Thyroid gland (tissue), 4 donors: ENCODE measurements at regions of chr7 and their contacts with region 1.

Region 1: GRCh38 chr7:90424720-90425119 is 21.5 kb downstream of the CLDN12 start:
- DNase-seq: no peak
- H3K4me3 ChIP-seq: no peak overlapping the region
- H3K27ac ChIP-seq: no peak overlapping the region
- H3K4me1 ChIP-seq: no peaks in the 10 kb centered on the region
- H3K27me3 ChIP-seq: no peaks in the 10 kb centered on the region
- CTCF ChIP-seq: no peak
- POLR2A ChIP-seq: no peak

Region 2: DNA sequence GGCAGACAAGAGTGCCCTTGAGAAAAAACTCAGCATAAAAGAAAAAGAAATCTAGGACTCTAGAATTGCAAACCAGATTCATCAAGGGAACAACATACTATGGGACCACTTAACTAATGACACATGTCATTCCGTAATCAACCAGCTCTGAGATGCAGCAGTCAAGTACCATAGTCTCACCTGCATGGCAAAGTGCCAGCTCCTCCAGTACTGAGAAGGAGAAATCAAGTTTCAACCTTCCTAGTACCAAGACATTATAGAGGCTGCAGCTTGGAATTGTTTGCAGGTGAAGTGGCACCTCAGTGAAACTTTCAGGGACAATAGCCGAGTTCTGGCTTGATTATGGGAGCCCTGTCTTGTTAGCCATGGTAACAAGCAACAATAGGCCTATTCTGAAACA is 259.0 kb before region 1 on chr7:
- intact Hi-C with region 1: loop called (anchors 10 kb)
- DNase-seq: peak; percentile 26 to 32
- H3K4me3 ChIP-seq: no peak overlapping the region
- H3K27ac ChIP-seq: no peak overlapping the region
- H3K4me1 ChIP-seq: no peaks in the 10 kb centered on the region
- H3K27me3 ChIP-seq: no peaks in the 10 kb centered on the region
- CTCF ChIP-seq: no peak
- POLR2A ChIP-seq: no peak

Region 3: GRCh38 chr7:90244909-90245851 is 179.5 kb before region 1 on chr7 and contains the start of gene CFAP69:
- intact Hi-C with region 1: loop called (anchors 10 kb)
- DNase-seq: peak; percentile 92 to 93
- H3K4me3 ChIP-seq: peak within 1 kb of the TSS; percentile 91 to 97 (median 94)
- H3K27ac ChIP-seq: peak within 1 kb of the TSS in 2 of 3 donors; percentile 44 to 54
- H3K4me1 ChIP-seq: peaks cover 12 to 15% of the 10 kb centered on the region in 2 donors
- H3K27me3 ChIP-seq: no peaks in the 10 kb centered on the region
- CTCF ChIP-seq: peak in 4 of 6 experiments; percentile 32 to 53 (median 42)
- POLR2A ChIP-seq: peak in 1 of 2 donors; percentile 38
- total RNA-seq, gene CFAP69: 12.6 to 73.8 (median 32.5) TPM